IMR-90 (cell line): ENCODE measurements at regions of chr1 and their contacts with region 1.

Region 1: GRCh38 chr1:232049335-232049734 is 422.7 kb downstream of the DISC1 start:
- DNase-seq: no peak
- ATAC-seq: no peak
- H3K4me3 ChIP-seq: no peak overlapping the region
- H3K27ac ChIP-seq: no peak overlapping the region
- H3K4me1 ChIP-seq: no peaks in the 10 kb centered on the region
- H3K27me3 ChIP-seq: no peaks in the 10 kb centered on the region
- CTCF ChIP-seq: no peak
- POLR2A ChIP-seq: no peak
- RAD21 ChIP-seq: no peak

Region 2: DNA sequence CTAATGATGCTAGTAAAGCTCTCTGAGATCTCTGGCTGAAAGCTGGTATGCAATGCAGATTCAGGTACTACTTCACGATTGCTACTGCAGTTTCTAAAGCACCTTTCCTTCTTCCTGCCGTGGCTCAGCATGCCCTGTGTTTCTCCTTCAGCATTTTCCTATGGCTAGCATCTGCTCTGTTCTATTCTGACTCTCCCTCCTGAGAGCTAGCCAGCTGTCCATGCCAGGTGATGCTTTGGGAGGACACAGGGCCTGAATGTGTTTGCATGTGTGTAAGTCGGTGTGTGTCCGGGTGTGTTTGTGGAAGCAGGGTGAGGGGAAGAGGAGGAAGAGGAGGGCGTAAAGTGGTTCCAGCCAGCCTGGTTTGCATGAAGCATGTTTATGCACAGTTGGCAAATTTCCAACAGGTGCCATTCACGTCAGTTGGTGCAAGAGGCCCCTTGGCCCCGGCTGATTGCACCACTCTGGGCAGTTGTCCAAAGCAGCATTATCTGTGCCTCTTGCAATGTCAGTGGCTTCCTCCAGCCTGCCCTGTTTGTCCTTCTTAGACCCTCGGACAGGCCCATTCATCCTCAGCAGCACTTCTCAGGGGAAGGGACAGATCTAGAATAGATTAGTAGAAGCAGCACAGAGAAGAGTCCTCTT is 10.5 kb after region 1 on chr1:
- CTCF ChIA-PET with region 1: interaction called, 11 read pairs
- POLR2A ChIA-PET with region 1: no interaction called
- dilution Hi-C with region 1: no loop called
- in situ Hi-C with region 1: no loop called
- intact Hi-C with region 1: no loop called
- DNase-seq: no peak
- ATAC-seq: no peak
- H3K4me3 ChIP-seq: no peak overlapping the region
- H3K27ac ChIP-seq: no peak overlapping the region
- H3K4me1 ChIP-seq: no peaks in the 10 kb centered on the region
- H3K27me3 ChIP-seq: no peaks in the 10 kb centered on the region
- CTCF ChIP-seq: no peak
- POLR2A ChIP-seq: no peak
- RAD21 ChIP-seq: no peak

Region 3: GRCh38 chr1:232212253-232212652 is 162.9 kb after region 1 on chr1:
- CTCF ChIA-PET with region 1: no interaction called
- POLR2A ChIA-PET with region 1: interaction called, 13 read pairs
- dilution Hi-C with region 1: no loop called
- in situ Hi-C with region 1: no loop called
- intact Hi-C with region 1: no loop called
- DNase-seq: no peak
- ATAC-seq: peak; percentile 35; the same call in 1 of the 2 replicates
- H3K4me3 ChIP-seq: no peak overlapping the region
- H3K27ac ChIP-seq: no peak overlapping the region
- H3K4me1 ChIP-seq: no peaks in the 10 kb centered on the region
- H3K27me3 ChIP-seq: no peaks in the 10 kb centered on the region; the same call in 1 of the 2 replicates
- CTCF ChIP-seq: no peak
- POLR2A ChIP-seq: no peak
- RAD21 ChIP-seq: no peak